ENCODE measurements at regions of chr4 and their contacts with region 1.

Region 1: DNA sequence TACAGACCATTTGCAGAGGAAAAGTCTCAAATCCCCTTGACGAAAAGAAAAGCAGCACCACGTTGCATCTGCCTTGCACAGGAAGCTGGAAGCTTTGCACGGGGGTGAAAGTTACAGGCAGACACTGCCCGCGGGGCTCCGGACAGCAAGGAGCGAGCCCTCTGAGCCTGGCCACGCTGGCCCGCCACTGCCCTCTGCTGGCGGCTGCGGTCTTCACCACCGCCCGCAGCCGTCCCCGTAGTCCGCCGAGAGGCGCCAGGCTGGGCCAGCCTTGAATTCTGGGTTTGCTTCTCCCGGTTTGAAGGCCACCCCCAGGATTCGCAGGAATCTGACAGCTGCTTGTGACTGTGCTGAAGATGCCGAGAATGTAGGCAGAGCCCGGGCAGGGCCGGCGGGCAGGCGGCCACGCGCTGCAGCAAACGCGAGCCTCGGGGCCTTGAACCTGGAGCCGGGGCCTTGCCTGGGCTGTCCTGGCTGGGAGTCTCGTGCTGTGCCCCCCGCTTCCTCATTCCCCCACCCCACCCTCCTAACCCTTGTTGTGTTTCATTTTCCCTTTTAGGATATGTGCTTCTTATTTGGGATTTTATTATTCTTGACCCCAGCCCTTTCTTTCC is 49.2 kb downstream of the ENPP6 start:
- DNase-seq: peak; percentile 66
- ATAC-seq: peak; percentile 89
- H3K4me3 Mint-ChIP-seq: no peak overlapping the region
- H3K27ac Mint-ChIP-seq: no peak overlapping the region
- H3K4me1 Mint-ChIP-seq: peaks cover 6% of the 10 kb centered on the region
- H3K27me3 Mint-ChIP-seq: peaks cover 48% of the 10 kb centered on the region
- CTCF ChIP-seq: peak; percentile 95

Region 2: DNA sequence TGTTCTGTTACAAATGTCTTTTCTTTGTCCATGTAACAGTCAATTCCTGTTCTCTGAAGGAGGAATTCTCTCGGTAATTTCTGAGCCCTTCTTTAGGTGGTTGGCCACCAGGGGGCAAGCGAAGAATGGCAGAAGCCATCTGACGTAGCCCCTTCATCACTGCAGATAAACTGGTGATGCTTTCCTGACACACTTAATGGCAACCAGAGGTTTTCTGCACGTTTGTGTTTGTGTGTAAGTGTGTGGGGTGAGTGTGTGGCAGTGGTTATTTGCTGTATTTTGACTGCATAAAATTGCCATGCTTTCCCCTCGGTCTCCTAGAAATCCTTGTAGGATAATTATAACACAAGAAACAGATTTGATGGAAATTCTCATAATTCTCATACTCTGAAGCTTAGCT is 328.2 kb before region 1 on chr4:
- CTCF ChIA-PET with region 1: no interaction called
- POLR2A ChIA-PET with region 1: no interaction called
- intact Hi-C with region 1: loop called (anchors 5 kb)
- DNase-seq: peak; percentile 81
- ATAC-seq: peak; percentile 27
- H3K4me3 Mint-ChIP-seq: no peak overlapping the region
- H3K27ac Mint-ChIP-seq: no peak overlapping the region
- H3K4me1 Mint-ChIP-seq: no peaks in the 10 kb centered on the region
- H3K27me3 Mint-ChIP-seq: peaks cover 4% of the 10 kb centered on the region
- CTCF ChIP-seq: peak; percentile 87

Region 3: GRCh38 chr4:183996868-183997267 is 171.6 kb before region 1 on chr4:
- CTCF ChIA-PET with region 1: no interaction called
- POLR2A ChIA-PET with region 1: no interaction called
- intact Hi-C with region 1: no loop called
- DNase-seq: no peak
- ATAC-seq: no peak
- H3K4me3 Mint-ChIP-seq: no peak overlapping the region
- H3K27ac Mint-ChIP-seq: no peak overlapping the region
- H3K4me1 Mint-ChIP-seq: no peaks in the 10 kb centered on the region
- H3K27me3 Mint-ChIP-seq: no peaks in the 10 kb centered on the region
- CTCF ChIP-seq: no peak

Region 4: DNA sequence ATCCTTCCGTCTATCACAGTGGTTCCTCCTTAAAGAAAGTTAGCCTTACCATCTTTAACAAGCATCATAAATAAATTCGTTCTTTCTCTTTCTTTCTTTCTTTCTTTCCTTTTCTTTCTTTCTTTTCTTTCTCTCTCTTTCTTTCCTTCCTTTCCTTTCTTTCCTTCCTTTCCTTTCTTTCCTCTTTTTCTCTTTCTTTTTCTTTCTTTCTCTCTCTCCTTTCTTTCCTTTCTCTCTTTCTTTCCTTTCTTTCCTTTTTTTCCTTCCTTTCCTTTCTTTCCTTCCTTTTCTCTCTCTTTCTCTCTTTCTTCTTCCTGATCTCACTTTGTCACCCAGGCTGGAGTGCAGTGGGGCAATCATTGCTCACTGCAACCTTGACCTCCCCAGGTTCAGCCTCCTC is 11.2 kb before region 1 on chr4:
- CTCF ChIA-PET with region 1: interaction called, 18 read pairs
- POLR2A ChIA-PET with region 1: no interaction called
- intact Hi-C with region 1: no loop called
- DNase-seq: no peak
- ATAC-seq: no peak
- H3K4me3 Mint-ChIP-seq: no peak overlapping the region
- H3K27ac Mint-ChIP-seq: no peak overlapping the region
- H3K4me1 Mint-ChIP-seq: no peaks in the 10 kb centered on the region
- H3K27me3 Mint-ChIP-seq: peaks cover 23% of the 10 kb centered on the region
- CTCF ChIP-seq: no peak

Region 5: GRCh38 chr4:184250795-184251669 is 82.5 kb after region 1 on chr4:
- CTCF ChIA-PET with region 1: interaction called, 15 read pairs
- POLR2A ChIA-PET with region 1: no interaction called
- intact Hi-C with region 1: no loop called
- DNase-seq: peak; percentile 37
- ATAC-seq: peak; percentile 67
- H3K4me3 Mint-ChIP-seq: no peak overlapping the region
- H3K27ac Mint-ChIP-seq: peak overlapping the region; percentile 87
- H3K4me1 Mint-ChIP-seq: peaks cover 20% of the 10 kb centered on the region
- H3K27me3 Mint-ChIP-seq: peaks cover 4% of the 10 kb centered on the region
- CTCF ChIP-seq: peak; percentile 78